B cell (primary cell): ENCODE measurements at regions of chr17 and their contacts with region 1.

Region 1: DNA sequence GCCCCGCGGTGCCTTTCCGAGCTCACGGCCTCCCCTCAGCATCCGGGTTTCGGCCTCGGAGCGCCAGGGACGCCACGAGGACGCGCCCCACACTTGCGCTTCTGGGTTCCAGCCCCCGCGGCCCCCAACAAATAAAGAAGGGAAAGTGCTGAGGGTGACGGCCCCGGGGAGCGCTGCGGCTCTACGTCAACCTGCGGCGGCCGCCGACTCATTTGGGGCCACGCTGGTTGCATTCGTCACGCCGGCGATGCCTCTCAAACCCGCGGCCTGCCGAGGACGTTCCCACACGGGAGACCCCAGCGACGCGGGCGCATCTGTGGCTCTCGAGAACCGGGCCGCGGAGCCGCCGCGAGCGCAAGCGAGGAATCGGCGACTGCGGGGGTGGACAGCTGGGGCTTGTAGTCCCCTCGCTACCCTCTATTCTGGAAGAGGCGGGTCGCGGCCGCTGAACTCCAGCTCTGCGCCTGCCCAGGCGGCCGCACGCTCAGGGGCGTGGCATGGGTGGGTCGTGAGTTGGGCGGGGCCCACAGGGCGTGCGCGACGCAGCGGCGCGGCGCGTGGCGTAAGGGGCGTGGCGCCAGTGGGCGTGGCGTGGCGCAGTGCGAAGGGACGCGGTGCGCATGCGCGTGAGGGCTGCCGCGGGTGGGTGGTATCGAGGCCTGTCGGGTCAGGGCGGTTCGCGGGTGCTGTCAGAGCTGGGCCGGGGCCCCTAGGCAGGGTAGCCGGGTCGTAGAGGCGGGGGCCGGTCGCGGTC is at the start of gene AMZ2:
- DNase-seq: peak; percentile 99
- ATAC-seq: peak; percentile 89
- H3K4me3 ChIP-seq: peak within 1 kb of the TSS; percentile 24 to 81 (median 76)
- H3K4me3 Mint-ChIP-seq: peak within 1 kb of the TSS; percentile 96
- H3K27ac ChIP-seq: peak within 1 kb of the TSS; percentile 96 to 98
- H3K27ac Mint-ChIP-seq: peak within 1 kb of the TSS; percentile 99
- H3K4me1 ChIP-seq: peaks cover 31 to 34% of the 10 kb centered on the region in 2 donors
- H3K4me1 Mint-ChIP-seq: peaks cover 54% of the 10 kb centered on the region
- H3K27me3 ChIP-seq: no peaks in the 10 kb centered on the region
- H3K27me3 Mint-ChIP-seq: no peaks in the 10 kb centered on the region
- CTCF ChIP-seq: no peak
- total RNA-seq, gene AMZ2: 70.7 and 74.3 TPM in 2 replicates

Region 2: GRCh38 chr17:67725373-67725791 is 522.2 kb before region 1 on chr17:
- CTCF ChIA-PET with region 1: no interaction called
- POLR2A ChIA-PET with region 1: no interaction called
- intact Hi-C with region 1: no loop called
- DNase-seq: no peak
- ATAC-seq: no peak
- H3K4me3 ChIP-seq: no peak overlapping the region
- H3K4me3 Mint-ChIP-seq: no peak overlapping the region
- H3K27ac ChIP-seq: no peak overlapping the region
- H3K27ac Mint-ChIP-seq: no peak overlapping the region
- H3K4me1 ChIP-seq: no peaks in the 10 kb centered on the region
- H3K4me1 Mint-ChIP-seq: no peaks in the 10 kb centered on the region
- H3K27me3 ChIP-seq: no peaks in the 10 kb centered on the region
- H3K27me3 Mint-ChIP-seq: no peaks in the 10 kb centered on the region
- CTCF ChIP-seq: no peak

Region 3: GRCh38 chr17:68179236-68179925 is 68.2 kb before region 1 on chr17:
- CTCF ChIA-PET with region 1: interaction called, 15 read pairs
- POLR2A ChIA-PET with region 1: interaction called, 27 read pairs
- intact Hi-C with region 1: loop called (anchors 2 kb)
- DNase-seq: no peak
- ATAC-seq: no peak
- H3K4me3 ChIP-seq: no peak overlapping the region
- H3K4me3 Mint-ChIP-seq: no peak overlapping the region
- H3K27ac ChIP-seq: no peak overlapping the region
- H3K27ac Mint-ChIP-seq: no peak overlapping the region
- H3K4me1 ChIP-seq: peaks cover 36 to 44% of the 10 kb centered on the region in 2 donors
- H3K4me1 Mint-ChIP-seq: peaks cover 34% of the 10 kb centered on the region
- H3K27me3 ChIP-seq: no peaks in the 10 kb centered on the region
- H3K27me3 Mint-ChIP-seq: no peaks in the 10 kb centered on the region
- CTCF ChIP-seq: no peak

Region 4: GRCh38 chr17:68228817-68229572 is 18.6 kb before region 1 on chr17:
- CTCF ChIA-PET with region 1: interaction called, 3 read pairs
- POLR2A ChIA-PET with region 1: interaction called, 18 read pairs
- intact Hi-C with region 1: no loop called
- DNase-seq: no peak
- ATAC-seq: no peak
- H3K4me3 ChIP-seq: no peak overlapping the region
- H3K4me3 Mint-ChIP-seq: no peak overlapping the region
- H3K27ac ChIP-seq: no peak overlapping the region
- H3K27ac Mint-ChIP-seq: peak overlapping the region; percentile 91
- H3K4me1 ChIP-seq: peaks cover 24 to 25% of the 10 kb centered on the region in 2 donors
- H3K4me1 Mint-ChIP-seq: peaks cover 67% of the 10 kb centered on the region
- H3K27me3 ChIP-seq: no peaks in the 10 kb centered on the region
- H3K27me3 Mint-ChIP-seq: no peaks in the 10 kb centered on the region
- CTCF ChIP-seq: no peak

Region 5: GRCh38 chr17:68314916-68315535 is 67.4 kb after region 1 on chr17:
- CTCF ChIA-PET with region 1: no interaction called
- POLR2A ChIA-PET with region 1: no interaction called
- intact Hi-C with region 1: no loop called
- DNase-seq: no peak
- ATAC-seq: no peak
- H3K4me3 ChIP-seq: peak overlapping the region in 1 of 5 experiments; percentile 4
- H3K4me3 Mint-ChIP-seq: peak overlapping the region; percentile 26
- H3K27ac ChIP-seq: no peak overlapping the region
- H3K27ac Mint-ChIP-seq: no peak overlapping the region
- H3K4me1 ChIP-seq: peaks cover 30 to 31% of the 10 kb centered on the region in 2 donors
- H3K4me1 Mint-ChIP-seq: peaks cover 31% of the 10 kb centered on the region
- H3K27me3 ChIP-seq: peaks cover 0 to 5% (median 0%) of the 10 kb centered on the region in 4 experiments
- H3K27me3 Mint-ChIP-seq: peaks cover 6% of the 10 kb centered on the region
- CTCF ChIP-seq: no peak